Left colon (tissue), 2 donors: ENCODE measurements at regions of chr3 and their contacts with region 1.

Region 1: DNA sequence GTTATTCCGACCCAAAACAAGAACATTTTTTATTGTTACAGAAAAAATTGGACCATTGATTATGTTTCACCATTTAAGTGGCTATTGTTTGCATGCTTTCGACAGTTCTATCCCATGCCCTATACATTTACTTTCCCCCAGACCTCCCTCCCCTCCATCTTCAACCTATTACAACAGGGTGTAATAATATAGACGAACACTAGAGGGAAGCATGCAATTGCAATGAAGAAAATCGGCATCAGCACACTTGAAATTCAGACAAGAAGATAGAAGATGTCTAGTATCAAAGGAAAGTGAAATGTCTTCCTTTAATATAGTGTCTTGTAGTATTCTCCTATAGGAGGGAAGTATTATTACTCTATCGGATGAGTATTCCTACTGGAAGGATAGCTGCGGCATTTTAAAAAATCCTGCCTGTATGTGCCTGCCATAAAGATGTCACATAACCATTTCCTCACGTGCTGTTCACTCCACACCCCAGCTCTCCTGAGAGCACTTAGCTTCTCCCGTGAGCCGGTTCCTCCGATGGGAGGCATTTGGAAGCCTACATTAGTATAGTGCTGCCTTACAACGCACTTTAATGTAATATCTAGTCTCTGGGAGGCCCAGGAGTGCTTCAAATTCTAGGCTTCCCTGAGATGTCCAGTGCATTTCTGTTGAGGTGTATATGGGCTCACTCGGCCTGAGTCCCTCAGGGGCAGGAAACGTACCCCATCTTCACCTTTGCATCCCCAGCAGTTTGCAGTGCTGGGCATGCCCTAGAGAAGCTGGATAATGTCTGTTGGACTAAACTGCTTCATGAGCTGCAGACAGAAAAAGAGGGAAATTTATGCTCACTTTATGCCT is 17.8 kb upstream of the ERICH6 start:
- DNase-seq: no peak
- ATAC-seq: peak; percentile 44

Region 2: DNA sequence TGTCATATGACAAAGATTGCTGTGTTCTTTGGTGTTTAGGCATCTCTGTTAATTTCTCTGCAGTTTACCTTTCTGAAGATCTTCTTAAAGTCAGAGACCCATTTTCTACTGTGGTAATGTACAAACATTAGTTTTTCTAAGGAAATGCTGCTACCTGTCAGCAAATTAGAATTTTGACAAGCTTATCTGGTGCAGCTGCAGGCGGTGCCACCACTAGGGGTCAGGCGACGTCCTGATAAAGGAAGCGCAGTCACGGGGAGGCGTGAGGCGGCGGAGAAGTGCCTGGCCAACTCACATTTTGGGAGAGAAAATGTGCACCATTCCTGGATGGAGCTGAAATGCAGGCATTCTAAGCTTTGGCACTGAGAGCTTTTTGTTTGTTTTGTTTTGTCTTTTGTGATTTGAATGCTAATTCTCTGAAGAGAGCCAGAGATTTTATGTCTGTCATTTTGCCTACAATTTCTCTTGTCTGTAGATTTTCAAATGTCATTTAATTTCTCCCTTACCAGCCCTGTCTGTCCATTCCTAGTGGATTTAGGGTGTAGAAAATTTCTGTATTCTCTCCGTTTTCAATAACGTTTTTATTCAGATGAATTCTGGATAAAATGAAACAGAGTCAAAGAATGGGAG is 66.3 kb after region 1 on chr3:
- intact Hi-C with region 1: loop called in 1 of 2 experiments (anchors 10 kb)
- DNase-seq: peak; percentile 76 to 94
- ATAC-seq: peak; percentile 81

Region 3: GRCh38 chr3:150868282-150868681 is 146.8 kb after region 1 on chr3:
- intact Hi-C with region 1: loop called in 1 of 2 experiments (anchors 5 kb)
- DNase-seq: no peak
- ATAC-seq: no peak

Region 4: GRCh38 chr3:151146071-151146730 is 424.7 kb after region 1 on chr3:
- intact Hi-C with region 1: loop called in 1 of 2 experiments (anchors 10 kb)
- DNase-seq: peak; percentile 64 to 66
- ATAC-seq: peak; percentile 97